ENCODE measurements at regions of chr13 and their contacts with region 1.

Region 1: DNA sequence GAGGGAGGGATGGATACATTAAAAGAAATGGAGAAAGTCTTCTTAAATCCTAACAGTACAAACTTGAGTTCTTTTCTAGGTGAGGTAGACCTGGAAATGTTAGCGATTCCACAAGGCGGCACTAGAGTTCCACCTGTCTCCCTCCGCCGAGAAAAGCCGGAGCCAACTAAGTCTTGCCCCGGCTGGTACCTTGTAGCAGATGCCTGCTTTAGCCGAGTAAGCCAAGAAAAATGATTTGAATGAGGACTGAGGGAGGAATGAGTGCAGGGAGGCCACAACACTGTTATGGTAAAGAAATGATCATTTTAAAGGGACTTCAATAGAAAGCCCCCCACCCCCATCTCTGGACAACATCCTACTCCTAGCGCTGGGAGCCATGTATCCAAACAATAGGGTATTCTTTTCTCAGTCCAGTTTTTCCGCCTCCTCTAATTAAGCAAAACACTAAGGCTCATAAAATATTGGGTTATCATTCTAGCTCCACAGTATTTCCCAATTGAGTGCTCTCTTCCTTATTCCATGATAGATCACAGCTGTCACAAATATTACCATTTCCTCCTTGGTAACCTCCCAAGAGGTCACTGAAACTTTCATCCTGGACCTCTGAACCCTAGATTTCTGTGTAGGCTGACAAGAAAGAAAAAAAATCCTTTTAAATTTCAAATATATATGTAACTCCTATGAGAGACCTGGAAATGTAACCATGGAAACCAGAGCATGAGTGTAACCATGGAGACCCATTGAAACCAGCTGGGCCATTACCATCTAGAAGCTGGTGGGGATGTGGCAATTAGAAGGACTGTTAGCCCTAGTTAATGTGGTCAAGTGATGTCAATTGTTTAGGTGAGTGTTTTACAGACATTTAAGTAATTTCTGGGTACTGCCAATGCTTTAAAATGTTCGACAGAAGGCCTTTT is 58.3 kb downstream of the GPALPP1 start:
- DNase-seq: peak; percentile 69
- ATAC-seq: peak; percentile 96
- H3K4me3 ChIP-seq: peak overlapping the region; percentile 48 to 71
- H3K27ac ChIP-seq: no peak overlapping the region
- H3K4me1 ChIP-seq: no peaks in the 10 kb centered on the region
- H3K27me3 ChIP-seq: no peaks in the 10 kb centered on the region
- CTCF ChIP-seq: peak; percentile 91

Region 2: GRCh38 chr13:44840131-44840530 is 207.5 kb before region 1 on chr13:
- CTCF ChIA-PET with region 1: interaction called, 11 read pairs
- POLR2A ChIA-PET with region 1: no interaction called
- in situ Hi-C with region 1: no loop called
- intact Hi-C with region 1: no loop called
- DNase-seq: no peak
- ATAC-seq: no peak
- H3K4me3 ChIP-seq: no peak overlapping the region
- H3K27ac ChIP-seq: no peak overlapping the region
- H3K4me1 ChIP-seq: no peaks in the 10 kb centered on the region
- H3K27me3 ChIP-seq: no peaks in the 10 kb centered on the region
- CTCF ChIP-seq: no peak

Region 3: DNA sequence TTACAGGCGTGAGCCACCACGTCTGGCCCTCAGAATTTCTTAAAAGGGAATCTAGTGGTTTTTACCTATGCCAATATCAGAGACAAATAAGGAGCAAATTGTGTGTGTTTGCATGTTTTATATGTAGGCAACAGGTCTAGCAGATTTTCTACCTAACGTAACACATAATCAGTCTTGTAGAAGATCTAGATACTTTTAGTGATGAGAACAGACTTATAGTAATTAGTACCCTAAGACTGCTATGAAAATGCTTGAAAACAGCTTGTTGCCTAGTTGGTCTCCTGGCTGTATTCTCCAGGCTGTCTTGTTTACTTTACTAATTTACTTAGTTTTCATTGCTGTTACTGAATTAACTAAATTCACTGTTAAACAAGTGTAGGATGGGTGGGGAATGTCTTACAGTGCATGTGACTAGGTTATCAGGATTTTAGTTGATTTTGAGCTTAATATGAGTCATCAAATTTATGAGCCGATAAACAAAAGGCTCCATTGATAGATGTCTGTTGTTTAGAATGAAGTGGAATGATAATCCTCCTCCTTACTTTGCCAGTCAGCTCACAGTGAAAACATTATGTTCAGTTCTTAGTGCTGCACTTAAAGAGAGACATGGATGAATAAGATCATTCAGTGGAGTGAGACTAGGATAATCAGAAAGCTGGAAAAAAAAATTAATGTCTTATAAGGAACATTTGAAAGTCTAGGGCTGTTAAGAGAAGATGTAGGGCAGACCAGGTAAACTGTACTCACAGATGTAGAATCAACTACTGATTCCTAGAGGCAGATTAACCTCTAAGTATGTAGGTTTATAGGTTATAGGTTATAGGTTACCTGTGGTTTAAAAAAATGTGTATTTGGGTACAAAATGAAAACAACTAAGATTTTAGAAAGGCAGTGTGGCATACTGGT is 95.0 kb after region 1 on chr13:
- CTCF ChIA-PET with region 1: no interaction called
- POLR2A ChIA-PET with region 1: interaction called, 14 read pairs
- in situ Hi-C with region 1: no loop called
- intact Hi-C with region 1: no loop called
- DNase-seq: no peak
- ATAC-seq: peak; percentile 88
- H3K4me3 ChIP-seq: no peak overlapping the region
- H3K27ac ChIP-seq: peak overlapping the region; percentile 87
- H3K4me1 ChIP-seq: peaks cover 25% of the 10 kb centered on the region
- H3K27me3 ChIP-seq: no peaks in the 10 kb centered on the region
- CTCF ChIP-seq: no peak

Region 4: DNA sequence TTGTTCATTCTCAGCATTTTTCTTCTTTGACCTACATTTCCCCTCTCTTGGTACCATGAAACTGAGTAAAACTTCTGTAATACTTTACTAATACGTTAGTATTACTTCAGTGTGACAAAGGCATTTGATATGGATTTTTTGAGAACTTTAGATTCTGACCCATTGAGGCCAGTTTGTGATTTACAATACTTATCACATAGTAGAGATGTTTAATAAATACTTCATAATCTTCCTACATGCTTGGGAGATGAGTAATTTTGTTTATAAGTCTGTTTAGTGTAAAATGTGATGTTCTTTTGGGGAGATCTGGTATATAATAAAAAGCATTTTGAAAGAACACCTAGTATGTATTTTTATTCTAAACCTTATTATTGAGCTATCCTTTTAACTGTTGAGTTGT is 102.3 kb after region 1 on chr13:
- CTCF ChIA-PET with region 1: interaction called, 11 read pairs
- POLR2A ChIA-PET with region 1: no interaction called
- in situ Hi-C with region 1: no loop called
- intact Hi-C with region 1: no loop called
- DNase-seq: no peak
- ATAC-seq: no peak
- H3K4me3 ChIP-seq: no peak overlapping the region
- H3K27ac ChIP-seq: no peak overlapping the region
- H3K4me1 ChIP-seq: no peaks in the 10 kb centered on the region
- H3K27me3 ChIP-seq: no peaks in the 10 kb centered on the region
- CTCF ChIP-seq: no peak

Region 5: DNA sequence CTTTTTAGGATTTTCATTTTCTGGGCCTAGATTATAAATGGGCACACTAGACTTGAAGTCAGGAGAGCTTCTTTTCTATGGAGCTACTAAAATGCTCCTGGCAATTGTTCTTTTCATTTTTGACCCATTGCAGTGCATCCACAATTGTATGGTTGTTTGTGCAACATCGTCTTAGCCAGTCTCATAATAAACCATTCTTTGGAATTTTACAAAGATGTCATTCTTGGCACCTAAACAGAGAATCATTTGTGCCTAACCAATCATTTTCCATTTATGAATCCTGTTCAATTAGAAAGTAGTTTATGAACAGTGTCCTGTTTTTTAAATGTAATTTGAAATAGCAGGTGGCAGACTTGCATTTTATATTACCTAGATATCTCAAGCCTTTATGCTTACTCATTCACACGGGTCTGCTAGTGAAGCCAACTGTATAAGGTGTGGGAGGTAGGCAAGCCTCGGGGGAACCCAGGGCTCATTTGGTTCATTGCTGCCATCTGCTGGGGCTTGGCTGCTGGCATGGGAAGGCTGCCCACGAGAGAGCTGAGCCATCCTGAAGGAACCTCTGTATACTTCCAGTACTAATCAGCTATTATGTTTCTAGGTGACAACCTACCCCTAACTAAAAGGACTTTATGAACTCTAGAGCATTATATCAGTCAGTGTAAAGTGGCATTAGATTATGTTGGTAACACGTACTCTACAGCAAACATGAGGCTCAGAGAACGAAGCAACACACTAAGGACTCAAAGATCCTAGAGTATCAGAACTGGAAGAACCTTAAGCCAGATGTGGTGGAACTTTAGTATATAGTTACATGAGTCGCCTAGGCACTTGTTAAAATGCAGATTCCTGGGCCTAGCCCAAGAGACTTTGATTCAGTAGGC is 233.3 kb after region 1 on chr13:
- CTCF ChIA-PET with region 1: interaction called, 6 read pairs
- POLR2A ChIA-PET with region 1: no interaction called
- in situ Hi-C with region 1: no loop called
- intact Hi-C with region 1: loop called (anchors 1 kb)
- DNase-seq: peak; percentile 46
- ATAC-seq: peak; percentile 99
- H3K4me3 ChIP-seq: no peak overlapping the region
- H3K27ac ChIP-seq: peak overlapping the region; percentile 36; the same call in 1 of the 2 replicates
- H3K4me1 ChIP-seq: peaks cover 9% of the 10 kb centered on the region; the same call in 1 of the 2 replicates
- H3K27me3 ChIP-seq: no peaks in the 10 kb centered on the region
- CTCF ChIP-seq: peak; percentile 82

Region 6: DNA sequence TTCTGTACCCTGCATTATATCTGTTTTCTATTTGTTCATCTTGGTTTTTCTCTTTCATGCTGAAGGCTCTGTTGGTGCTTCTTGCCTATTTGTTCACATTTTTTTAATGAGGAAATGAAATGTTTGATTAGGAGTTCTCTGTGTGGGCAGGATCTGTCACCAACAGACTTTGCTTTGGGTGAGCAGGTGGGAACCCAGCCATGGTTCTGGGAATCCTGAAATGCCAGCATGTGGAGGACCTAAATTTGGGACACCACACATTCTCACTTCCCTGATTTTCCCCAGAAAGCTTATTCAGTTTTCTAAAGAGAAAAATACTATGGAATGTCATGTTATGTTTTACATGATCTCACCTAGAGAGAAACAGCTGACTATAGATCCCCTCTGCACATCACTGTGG is 259.3 kb after region 1 on chr13:
- CTCF ChIA-PET with region 1: interaction called, 7 read pairs
- POLR2A ChIA-PET with region 1: no interaction called
- in situ Hi-C with region 1: no loop called
- intact Hi-C with region 1: loop called (anchors 5 kb)
- DNase-seq: no peak
- ATAC-seq: no peak
- H3K4me3 ChIP-seq: no peak overlapping the region
- H3K27ac ChIP-seq: no peak overlapping the region
- H3K4me1 ChIP-seq: peaks cover 4% of the 10 kb centered on the region; the same call in 1 of the 2 replicates
- H3K27me3 ChIP-seq: no peaks in the 10 kb centered on the region
- CTCF ChIP-seq: no peak

Region 7: GRCh38 chr13:45340422-45340925 is 292.8 kb after region 1 on chr13:
- CTCF ChIA-PET with region 1: interaction called, 11 read pairs
- POLR2A ChIA-PET with region 1: no interaction called
- in situ Hi-C with region 1: no loop called
- intact Hi-C with region 1: no loop called
- DNase-seq: no peak
- ATAC-seq: peak; percentile 49
- H3K4me3 ChIP-seq: peak overlapping the region; percentile 71 to 82
- H3K27ac ChIP-seq: peak overlapping the region; percentile 85
- H3K4me1 ChIP-seq: peaks cover 23% of the 10 kb centered on the region
- H3K27me3 ChIP-seq: no peaks in the 10 kb centered on the region
- CTCF ChIP-seq: no peak; the same call in 1 of the 2 replicates

Measured in Panc1 (cell line).